ENCODE measurements at regions of chr22 and their contacts with region 1.

Region 1: DNA sequence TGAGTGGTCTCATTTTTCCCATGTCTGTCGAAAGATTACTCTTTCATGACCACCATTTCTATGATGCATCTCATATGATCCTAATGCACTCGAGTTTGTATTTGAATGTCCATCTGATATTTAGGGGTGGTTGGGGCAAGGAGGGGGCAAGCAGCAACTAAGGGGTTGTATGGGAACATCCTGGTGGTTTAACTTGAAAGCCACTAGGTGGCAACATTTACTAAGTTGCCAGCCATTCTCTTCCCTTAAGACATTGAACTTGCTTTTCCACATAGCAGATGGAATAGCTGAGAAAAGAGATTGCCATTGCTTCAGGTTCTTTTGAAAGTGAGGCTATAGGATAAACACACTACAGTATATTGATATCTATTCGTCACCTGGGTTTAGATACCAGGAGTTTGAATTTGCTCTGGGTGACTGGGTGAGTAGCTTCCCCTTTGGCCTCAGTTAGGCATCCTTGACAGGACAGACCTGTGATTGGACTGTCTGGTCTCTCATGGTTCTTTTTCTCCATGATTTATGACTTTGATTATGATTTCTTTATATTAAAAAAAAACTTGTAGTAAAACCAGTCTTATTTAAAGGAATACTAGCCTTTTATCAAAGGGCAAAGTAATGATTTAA is 32.4 kb downstream of the NF2 start:
- DNase-seq: peak in 1 of 2 donors; percentile 53
- ATAC-seq: peak in 2 of 3 donors; percentile 50 to 57
- H3K4me3 ChIP-seq: no peak overlapping the region
- H3K4me3 Mint-ChIP-seq: no peak overlapping the region
- H3K27ac ChIP-seq: no peak overlapping the region
- H3K27ac Mint-ChIP-seq: no peak overlapping the region
- H3K4me1 ChIP-seq: peaks cover 10% of the 10 kb centered on the region
- H3K4me1 Mint-ChIP-seq: peaks cover 35 to 41% of the 10 kb centered on the region in 2 donors
- H3K27me3 ChIP-seq: no peaks in the 10 kb centered on the region
- H3K27me3 Mint-ChIP-seq: no peaks in the 10 kb centered on the region
- CTCF ChIP-seq: peak; percentile 51

Region 2: DNA sequence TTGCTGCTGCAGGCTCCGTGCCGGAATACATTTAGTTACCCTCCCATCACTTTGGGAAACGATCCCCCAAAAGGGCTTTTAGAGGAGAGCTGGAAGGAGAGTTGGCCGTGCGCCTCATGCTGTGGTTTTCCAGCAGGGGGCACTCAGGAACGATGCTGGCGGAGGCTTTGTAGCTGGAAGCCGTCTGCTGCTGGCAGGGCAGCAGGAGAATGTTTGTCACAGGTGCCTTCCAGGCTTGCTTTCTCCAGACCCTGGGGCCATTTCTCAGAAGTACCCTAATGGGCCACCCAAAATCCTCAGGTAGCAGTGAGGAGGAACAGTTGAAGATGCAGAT is 54.0 kb after region 1 on chr22:
- intact Hi-C with region 1: loop called (anchors 10 kb)
- DNase-seq: peak in 1 of 2 donors; percentile 51
- ATAC-seq: no peak
- H3K4me3 ChIP-seq: no peak overlapping the region
- H3K4me3 Mint-ChIP-seq: no peak overlapping the region
- H3K27ac ChIP-seq: no peak overlapping the region
- H3K27ac Mint-ChIP-seq: no peak overlapping the region
- H3K4me1 ChIP-seq: no peaks in the 10 kb centered on the region
- H3K4me1 Mint-ChIP-seq: peaks cover 5% of the 10 kb centered on the region in 2 donors
- H3K27me3 ChIP-seq: no peaks in the 10 kb centered on the region
- H3K27me3 Mint-ChIP-seq: no peaks in the 10 kb centered on the region
- CTCF ChIP-seq: peak; percentile 11

Region 3: GRCh38 chr22:30005213-30005857 is 369.5 kb after region 1 on chr22:
- intact Hi-C with region 1: loop called (anchors 1 kb)
- DNase-seq: peak; percentile 59 to 77
- ATAC-seq: peak; percentile 67 to 81 (median 78)
- H3K4me3 ChIP-seq: no peak overlapping the region
- H3K4me3 Mint-ChIP-seq: no peak overlapping the region
- H3K27ac ChIP-seq: no peak overlapping the region
- H3K27ac Mint-ChIP-seq: no peak overlapping the region
- H3K4me1 ChIP-seq: peaks cover 3% of the 10 kb centered on the region
- H3K4me1 Mint-ChIP-seq: peaks cover 4 to 10% of the 10 kb centered on the region in 2 donors
- H3K27me3 ChIP-seq: no peaks in the 10 kb centered on the region
- H3K27me3 Mint-ChIP-seq: no peaks in the 10 kb centered on the region
- CTCF ChIP-seq: peak; percentile 92

Region 4: GRCh38 chr22:30089655-30089974 is 453.8 kb after region 1 on chr22:
- intact Hi-C with region 1: loop called (anchors 1 kb)
- DNase-seq: no peak
- ATAC-seq: no peak
- H3K4me3 ChIP-seq: no peak overlapping the region
- H3K4me3 Mint-ChIP-seq: no peak overlapping the region
- H3K27ac ChIP-seq: no peak overlapping the region
- H3K27ac Mint-ChIP-seq: no peak overlapping the region
- H3K4me1 ChIP-seq: no peaks in the 10 kb centered on the region
- H3K4me1 Mint-ChIP-seq: no peaks in the 10 kb centered on the region
- H3K27me3 ChIP-seq: peaks cover 6% of the 10 kb centered on the region
- H3K27me3 Mint-ChIP-seq: peaks cover 9 to 22% of the 10 kb centered on the region in 2 donors
- CTCF ChIP-seq: no peak